Sciatic nerve (tissue), 2 donors: ENCODE measurements at regions of chr17 and their contacts with region 1.

Region 1: DNA sequence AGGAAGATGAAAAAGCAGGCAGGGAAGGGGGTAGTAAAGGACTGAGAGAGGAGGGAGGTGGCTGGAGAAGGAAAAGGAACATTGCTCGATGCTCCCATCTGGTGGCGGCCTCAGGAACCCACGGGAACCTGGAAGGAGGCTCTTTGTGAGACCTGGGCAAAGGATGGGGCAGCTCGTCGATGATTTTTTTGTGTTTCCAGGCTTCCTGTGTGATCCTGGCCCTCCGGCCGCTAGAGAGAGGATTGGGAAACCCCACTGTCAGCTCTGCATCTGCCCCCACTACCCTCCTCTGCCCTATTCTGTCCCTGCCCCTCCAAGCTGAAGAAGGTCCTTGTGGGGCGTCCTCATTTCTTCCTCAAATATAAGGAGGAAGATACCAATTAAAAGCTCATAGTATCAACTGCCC is 6.6 kb downstream of the WFIKKN2 start:
- DNase-seq: peak; percentile 87
- ATAC-seq: peak; percentile 84

Region 2: GRCh38 chr17:50783193-50783660 is 58.7 kb before region 1 on chr17:
- intact Hi-C with region 1: loop called (anchors 2 kb)
- DNase-seq: peak; percentile 91
- ATAC-seq: peak; percentile 91

Region 3: DNA sequence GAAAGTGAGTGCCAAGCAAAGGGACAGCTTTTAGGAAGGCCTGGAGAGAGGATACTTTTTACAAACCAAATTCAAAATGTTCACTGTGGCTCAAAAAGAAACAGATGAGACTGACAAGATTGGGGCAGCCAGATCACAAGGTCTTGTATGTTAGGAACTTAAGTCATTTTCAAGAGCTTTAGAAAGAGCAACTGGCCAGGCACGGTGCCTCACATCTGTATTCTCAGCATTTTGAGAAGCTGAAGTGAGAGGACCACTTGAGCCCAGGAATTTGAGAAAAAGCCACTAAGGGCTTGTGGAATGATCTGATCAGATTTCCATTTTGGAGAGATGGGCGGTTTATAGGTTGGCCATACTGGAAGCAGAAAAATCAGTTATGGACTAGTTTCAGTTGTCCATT is 261.5 kb after region 1 on chr17:
- intact Hi-C with region 1: no loop called
- DNase-seq: no peak
- ATAC-seq: no peak